ENCODE measurements at regions of chr14 and their contacts with region 1.

Region 1: DNA sequence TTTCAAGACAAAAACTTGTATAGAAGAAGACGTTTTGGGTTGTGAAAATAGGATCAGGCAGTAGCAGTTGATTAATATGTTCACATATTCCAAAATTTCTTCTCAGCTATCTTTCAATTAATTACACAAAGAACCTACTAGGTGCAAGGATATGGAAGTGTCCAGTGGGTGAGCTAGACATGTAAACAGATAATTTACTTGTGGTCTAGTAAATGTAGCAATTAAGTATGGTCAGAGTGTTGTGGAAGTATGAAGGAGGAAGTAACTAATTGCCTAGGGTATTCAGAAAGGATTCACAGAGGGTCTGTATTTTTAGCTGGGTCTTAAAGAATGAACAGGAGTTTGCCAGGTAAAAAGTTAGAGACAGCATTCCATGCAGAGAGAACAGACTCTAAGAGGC is 5.9 kb downstream of the GOLGA5 start:
- DNase-seq: no peak
- ATAC-seq: no peak
- H3K4me3 ChIP-seq: no peak overlapping the region
- H3K27ac ChIP-seq: peak overlapping the region in 1 of 10 donors; percentile 12
- H3K4me1 ChIP-seq: peaks cover 8 to 61% (median 43%) of the 10 kb centered on the region in 9 donors
- H3K27me3 ChIP-seq: no peaks in the 10 kb centered on the region
- CTCF ChIP-seq: no peak

Region 2: DNA sequence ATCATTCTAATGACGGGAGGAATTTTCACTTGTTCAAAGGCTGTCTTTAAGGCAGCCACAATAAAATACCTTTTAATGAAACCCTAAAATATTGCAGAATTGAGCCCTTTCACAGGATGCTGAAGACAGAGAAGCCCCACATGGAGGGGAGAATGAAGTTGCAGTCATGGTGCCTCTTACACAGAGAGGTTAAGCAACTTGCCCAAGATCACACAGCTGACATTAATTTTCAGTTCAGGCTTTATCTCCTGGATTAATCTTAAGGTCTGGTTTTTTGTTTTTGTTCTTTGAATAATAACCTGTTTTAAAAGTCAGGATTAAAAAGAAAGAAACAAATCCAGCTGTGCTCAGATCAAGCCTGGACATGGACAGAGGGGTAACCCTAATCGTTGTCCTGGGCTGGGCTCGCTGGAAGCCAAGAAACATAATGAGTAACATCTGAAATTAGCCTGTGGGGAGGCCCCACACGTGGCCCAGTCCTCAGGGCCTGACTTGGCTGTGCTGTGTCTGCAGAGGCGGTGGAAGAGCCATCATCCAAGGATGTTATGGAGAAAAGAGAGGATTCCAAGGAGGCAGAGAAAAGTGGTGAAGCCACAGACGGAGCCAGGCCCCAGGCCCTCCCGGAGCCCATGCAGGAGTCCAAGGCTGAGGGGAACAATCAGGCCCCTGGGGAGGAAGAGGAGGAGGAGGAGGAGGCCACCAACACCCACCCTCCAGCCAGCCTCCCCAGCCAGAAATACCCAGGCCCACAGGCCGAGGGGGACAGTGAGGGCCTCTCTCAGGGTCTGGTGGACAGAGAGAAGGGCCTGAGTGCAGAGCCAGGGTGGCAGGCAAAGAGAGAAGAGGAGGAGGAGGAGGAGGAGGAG is 131.0 kb after region 1 on chr14:
- intact Hi-C with region 1: no loop called
- DNase-seq: no peak
- ATAC-seq: no peak
- H3K4me3 ChIP-seq: no peak overlapping the region
- H3K27ac ChIP-seq: no peak overlapping the region
- H3K4me1 ChIP-seq: no peaks in the 10 kb centered on the region
- H3K27me3 ChIP-seq: peaks cover 0 to 5% (median 0%) of the 10 kb centered on the region in 7 donors
- CTCF ChIP-seq: no peak

Region 3: DNA sequence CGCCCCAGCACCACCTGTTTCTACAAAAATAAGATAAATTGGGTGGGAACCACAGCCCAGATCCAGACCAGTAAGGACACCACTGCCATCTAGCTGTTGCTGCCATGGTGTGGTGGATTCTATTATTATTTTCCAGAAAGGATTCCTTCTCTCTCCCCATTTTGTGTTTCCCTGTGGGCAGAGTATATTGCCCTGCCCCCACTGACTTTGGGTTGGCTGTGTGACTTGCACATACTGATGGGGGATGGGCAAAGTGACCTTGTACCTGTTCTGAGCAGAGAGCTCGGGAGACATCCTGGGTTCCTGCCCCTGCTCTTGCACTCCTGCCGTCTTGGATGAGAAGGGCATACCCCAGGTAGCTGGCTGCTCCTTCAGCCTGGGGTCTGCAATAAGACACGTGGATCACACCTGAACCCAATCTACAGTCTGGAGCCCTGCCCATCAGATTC is 360.4 kb after region 1 on chr14:
- intact Hi-C with region 1: no loop called
- DNase-seq: no peak
- ATAC-seq: no peak
- H3K4me3 ChIP-seq: no peak overlapping the region
- H3K27ac ChIP-seq: no peak overlapping the region
- H3K4me1 ChIP-seq: no peaks in the 10 kb centered on the region
- H3K27me3 ChIP-seq: no peaks in the 10 kb centered on the region
- CTCF ChIP-seq: peak in 6 of 9 donors; percentile 21 to 45 (median 34)

Region 4: DNA sequence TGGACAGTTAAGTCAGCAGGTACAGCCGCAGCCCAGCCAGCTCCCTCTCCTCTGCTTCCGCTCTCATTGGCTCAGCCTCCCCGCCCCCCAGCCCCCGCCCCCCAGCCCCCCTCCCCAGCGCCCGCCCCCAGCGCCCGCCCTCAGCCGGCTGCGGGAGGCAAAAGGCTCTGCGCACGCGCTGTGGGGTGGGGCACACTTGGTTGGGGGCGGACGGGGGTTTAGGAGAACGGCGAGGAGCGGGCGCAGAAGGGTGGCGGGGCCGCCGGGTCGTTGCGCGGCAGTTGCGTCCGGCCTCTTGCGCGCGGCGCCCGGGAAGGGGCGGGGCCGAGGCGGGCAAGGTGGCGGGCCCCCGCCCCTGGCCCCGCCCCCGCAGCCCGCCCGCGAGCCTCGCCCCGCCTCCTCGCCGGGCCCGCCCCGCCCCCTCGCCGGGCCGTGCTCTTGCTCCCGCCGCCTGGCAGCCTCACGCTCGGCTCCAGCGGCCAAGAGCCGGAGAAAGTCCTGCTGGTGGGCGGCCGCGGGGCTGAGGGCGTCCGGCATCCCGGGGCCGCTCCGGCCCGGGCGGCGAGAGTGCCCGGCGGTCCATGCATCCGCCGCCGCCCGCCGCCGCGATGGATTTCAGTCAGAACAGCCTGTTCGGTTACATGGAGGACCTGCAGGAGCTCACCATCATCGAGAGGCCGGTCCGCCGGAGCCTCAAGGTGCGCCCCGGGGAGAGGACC is 1374.0 kb after region 1 on chr14 and contains the start of gene PPP4R4:
- intact Hi-C with region 1: loop called in 1 of 10 experiments (anchors 5 kb)
- DNase-seq: peak; percentile 81 to 84
- ATAC-seq: peak; percentile 83 to 93 (median 91)
- H3K4me3 ChIP-seq: peak within 1 kb of the TSS; percentile 35 to 76 (median 64)
- H3K27ac ChIP-seq: peak within 1 kb of the TSS in 4 of 10 donors; percentile 2 to 73 (median 46)
- H3K4me1 ChIP-seq: peaks cover 6 to 24% (median 18%) of the 10 kb centered on the region in 9 donors
- H3K27me3 ChIP-seq: peaks cover 2 to 67% (median 35%) of the 10 kb centered on the region in 7 donors
- CTCF ChIP-seq: no peak
- total RNA-seq, gene PPP4R4: 0.13 to 0.46 (median 0.31) TPM in 5 of 10 donors, not detected in the others

Measured in heart right ventricle (tissue), 16 donors.